Pancreas (tissue), 10 donors: ENCODE measurements at regions of chr11 and their contacts with region 1.

Region 1: GRCh38 chr11:44538375-44539054 is 26.9 kb upstream of the CD82 start:
- DNase-seq: peak; percentile 45 to 87 (median 76)
- ATAC-seq: peak; percentile 88 to 100 (median 98)
- H3K4me3 ChIP-seq: no peak overlapping the region
- H3K27ac ChIP-seq: no peak overlapping the region
- H3K4me1 ChIP-seq: no peaks in the 10 kb centered on the region
- H3K27me3 ChIP-seq: no peaks in the 10 kb centered on the region
- CTCF ChIP-seq: peak; percentile 88 to 98 (median 92)

Region 2: GRCh38 chr11:44095506-44096394 is 442.8 kb before region 1 on chr11 and contains the start of gene EXT2:
- intact Hi-C with region 1: loop called in 2 of 3 experiments (anchors 10 kb)
- DNase-seq: peak; percentile 83 to 99 (median 92)
- ATAC-seq: peak; percentile 98 to 99 (median 99)
- H3K4me3 ChIP-seq: peak within 1 kb of the TSS; percentile 66 to 98 (median 90)
- H3K27ac ChIP-seq: peak within 1 kb of the TSS; percentile 68 to 71 (median 70)
- H3K4me1 ChIP-seq: peaks cover 5 to 11% (median 7%) of the 10 kb centered on the region in 3 donors
- H3K27me3 ChIP-seq: no peaks in the 10 kb centered on the region
- CTCF ChIP-seq: peak; percentile 77 to 89 (median 86)
- total RNA-seq, gene EXT2: 18.9 to 36.3 (median 26.8) TPM

Region 3: GRCh38 chr11:44104481-44105294 is 433.8 kb before region 1 on chr11:
- intact Hi-C with region 1: loop called in 2 of 3 experiments (anchors 10 kb)
- DNase-seq: no peak
- ATAC-seq: no peak
- H3K4me3 ChIP-seq: no peak overlapping the region
- H3K27ac ChIP-seq: no peak overlapping the region
- H3K4me1 ChIP-seq: no peaks in the 10 kb centered on the region
- H3K27me3 ChIP-seq: no peaks in the 10 kb centered on the region
- CTCF ChIP-seq: no peak

Region 4: GRCh38 chr11:44133335-44133946 is 405.1 kb before region 1 on chr11:
- intact Hi-C with region 1: loop called in 1 of 3 experiments (anchors 10 kb)
- DNase-seq: no peak
- ATAC-seq: peak; percentile 50 to 79 (median 76)
- H3K4me3 ChIP-seq: no peak overlapping the region
- H3K27ac ChIP-seq: no peak overlapping the region
- H3K4me1 ChIP-seq: no peaks in the 10 kb centered on the region
- H3K27me3 ChIP-seq: no peaks in the 10 kb centered on the region
- CTCF ChIP-seq: peak; percentile 15 to 34 (median 30)

Region 5: DNA sequence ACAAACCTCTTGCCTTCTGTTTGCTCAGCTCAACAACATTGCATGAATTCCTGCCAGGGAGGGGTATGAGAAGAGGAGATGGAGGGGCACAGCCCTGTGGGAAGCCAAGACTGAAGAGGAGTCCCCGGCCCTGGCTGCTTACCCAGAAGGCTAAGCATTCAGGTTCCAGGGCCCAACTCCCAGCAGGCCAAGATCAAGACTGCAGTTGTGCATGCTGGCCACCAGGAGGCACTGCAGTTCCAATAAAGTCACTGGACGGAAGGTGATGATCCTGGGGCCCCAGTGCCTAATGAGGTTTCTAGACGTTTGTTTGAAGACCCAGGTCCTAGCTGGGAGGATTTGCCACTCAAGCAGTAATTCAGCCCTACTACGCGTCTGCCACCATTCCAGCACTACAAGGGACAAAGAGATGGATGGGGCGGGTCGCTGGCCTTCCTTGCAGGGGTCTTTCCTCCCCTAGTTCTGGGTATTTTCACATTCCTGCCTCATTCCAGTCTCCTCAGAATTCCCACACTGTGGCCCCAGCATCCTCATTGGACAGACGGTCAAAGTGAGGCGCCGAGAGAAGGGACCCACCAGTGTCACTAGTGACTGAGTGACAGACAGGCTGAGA is 252.1 kb before region 1 on chr11:
- intact Hi-C with region 1: loop called in 2 of 3 experiments (anchors 2 to 5 kb)
- DNase-seq: peak in 4 of 6 donors; percentile 16 to 79 (median 54)
- ATAC-seq: peak; percentile 50 to 90 (median 83)
- H3K4me3 ChIP-seq: no peak overlapping the region
- H3K27ac ChIP-seq: no peak overlapping the region
- H3K4me1 ChIP-seq: no peaks in the 10 kb centered on the region
- H3K27me3 ChIP-seq: no peaks in the 10 kb centered on the region
- CTCF ChIP-seq: peak; percentile 82 to 95 (median 90)